ENCODE measurements at regions of chr4 and their contacts with region 1.

Region 1: GRCh38 chr4:173370477-173371291 is at the start of gene SAP30:
- DNase-seq: peak; percentile 99
- H3K4me3 ChIP-seq: peak within 1 kb of the TSS; percentile 87 to 99 (median 91)
- H3K27ac ChIP-seq: peak within 1 kb of the TSS; percentile 93
- H3K4me1 ChIP-seq: peaks cover 24% of the 10 kb centered on the region
- H3K27me3 ChIP-seq: no peaks in the 10 kb centered on the region
- CTCF ChIP-seq: no peak
- POLR2A ChIP-seq: peak; percentile 95
- total RNA-seq, gene SAP30: 23.8 and 27.1 TPM in 2 replicates

Region 2: GRCh38 chr4:173386751-173387150 is 16.1 kb after region 1 on chr4:
- CTCF ChIA-PET with region 1: no interaction called
- POLR2A ChIA-PET with region 1: no interaction called
- dilution Hi-C with region 1: no loop called
- intact Hi-C with region 1: no loop called
- DNase-seq: no peak
- H3K4me3 ChIP-seq: no peak overlapping the region
- H3K27ac ChIP-seq: no peak overlapping the region
- H3K4me1 ChIP-seq: no peaks in the 10 kb centered on the region
- H3K27me3 ChIP-seq: no peaks in the 10 kb centered on the region
- CTCF ChIP-seq: no peak
- POLR2A ChIP-seq: no peak

Region 3: DNA sequence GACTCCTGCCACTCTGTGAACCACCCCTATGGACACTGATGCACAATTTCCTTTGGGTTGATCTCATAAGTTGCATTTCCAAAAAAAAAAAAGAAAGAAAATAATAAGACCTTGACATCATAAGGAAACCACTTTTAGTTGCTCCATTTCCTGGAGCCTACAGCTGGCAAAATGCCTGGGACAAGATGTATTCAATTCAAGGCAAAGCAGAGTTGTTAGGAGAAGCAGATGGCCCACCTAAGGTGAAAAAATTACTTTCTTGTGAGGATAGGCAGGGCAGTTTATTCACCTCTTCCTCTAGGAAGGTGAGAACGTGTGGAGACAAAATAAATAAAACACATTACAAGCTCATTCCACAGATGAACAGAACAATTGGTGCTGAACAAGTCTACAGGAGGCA is 42.4 kb after region 1 on chr4:
- CTCF ChIA-PET with region 1: interaction called, 6 read pairs
- POLR2A ChIA-PET with region 1: interaction called, 7 read pairs
- dilution Hi-C with region 1: no loop called
- intact Hi-C with region 1: loop called (anchors 1 kb)
- DNase-seq: peak; percentile 68
- H3K4me3 ChIP-seq: no peak overlapping the region
- H3K27ac ChIP-seq: no peak overlapping the region
- H3K4me1 ChIP-seq: peaks cover 24% of the 10 kb centered on the region
- H3K27me3 ChIP-seq: no peaks in the 10 kb centered on the region
- CTCF ChIP-seq: no peak
- POLR2A ChIP-seq: no peak

Region 4: GRCh38 chr4:173466101-173466500 is 95.4 kb after region 1 on chr4:
- CTCF ChIA-PET with region 1: no interaction called
- POLR2A ChIA-PET with region 1: no interaction called
- dilution Hi-C with region 1: no loop called
- intact Hi-C with region 1: no loop called
- DNase-seq: no peak
- H3K4me3 ChIP-seq: no peak overlapping the region
- H3K27ac ChIP-seq: no peak overlapping the region
- H3K4me1 ChIP-seq: no peaks in the 10 kb centered on the region
- H3K27me3 ChIP-seq: no peaks in the 10 kb centered on the region
- CTCF ChIP-seq: no peak
- POLR2A ChIP-seq: no peak

Region 5: GRCh38 chr4:173494013-173494970 is 123.6 kb after region 1 on chr4:
- CTCF ChIA-PET with region 1: interaction called, 4 read pairs
- POLR2A ChIA-PET with region 1: interaction called, 5 read pairs
- dilution Hi-C with region 1: no loop called
- intact Hi-C with region 1: loop called (anchors 1 kb)
- DNase-seq: peak; percentile 53
- H3K4me3 ChIP-seq: peak overlapping the region; percentile 18 to 51 (median 24)
- H3K27ac ChIP-seq: no peak overlapping the region
- H3K4me1 ChIP-seq: peaks cover 14% of the 10 kb centered on the region
- H3K27me3 ChIP-seq: peaks cover 22 to 30% of the 10 kb centered on the region in 2 experiments
- CTCF ChIP-seq: peak; percentile 58 to 77
- POLR2A ChIP-seq: no peak

Region 6: DNA sequence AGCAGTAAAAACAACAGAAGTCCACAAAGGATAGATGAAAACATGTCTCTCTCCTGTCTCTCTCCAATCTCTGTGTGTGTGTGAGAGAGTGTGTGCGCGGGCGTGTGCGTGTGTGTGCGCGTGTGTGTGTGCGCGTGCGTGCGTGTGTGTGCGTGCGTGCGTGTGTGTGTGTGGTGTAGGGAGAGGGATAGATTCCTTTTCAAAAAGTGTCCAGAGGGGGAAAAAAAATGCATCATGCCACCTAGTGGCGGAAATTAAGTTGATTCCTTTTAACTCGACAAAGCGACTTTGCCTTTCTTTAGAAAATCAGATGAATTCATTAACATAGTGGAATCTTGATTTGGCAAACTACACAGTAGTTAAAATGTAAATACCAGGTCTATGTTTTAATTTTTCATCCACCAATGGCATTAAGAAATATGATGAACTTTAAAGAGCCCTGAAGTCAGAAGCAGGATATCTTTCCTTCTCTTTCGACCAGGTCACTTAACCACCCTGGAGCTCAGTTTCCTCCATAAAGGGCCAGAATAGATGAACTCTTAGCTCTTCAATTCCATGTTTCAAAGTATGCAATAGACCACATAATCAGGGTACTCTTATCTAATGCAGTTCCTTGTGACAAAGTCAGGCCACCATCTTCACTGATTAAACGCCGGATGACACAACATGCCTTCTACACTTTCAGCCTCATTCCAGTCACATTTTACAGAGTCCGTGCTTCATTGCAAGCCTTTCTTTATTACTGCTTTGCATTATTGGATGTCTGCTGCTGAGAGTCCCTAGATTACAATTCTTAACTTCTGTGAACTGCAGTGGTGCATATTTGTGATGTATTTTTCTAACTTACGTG is 750.0 kb after region 1 on chr4:
- CTCF ChIA-PET with region 1: no interaction called
- POLR2A ChIA-PET with region 1: interaction called, 10 read pairs
- dilution Hi-C with region 1: no loop called
- intact Hi-C with region 1: no loop called
- DNase-seq: peak; percentile 65
- H3K4me3 ChIP-seq: peak overlapping the region in 1 of 3 experiments; percentile 39
- H3K27ac ChIP-seq: no peak overlapping the region
- H3K4me1 ChIP-seq: no peaks in the 10 kb centered on the region
- H3K27me3 ChIP-seq: peaks cover 7 to 26% of the 10 kb centered on the region in 2 experiments
- CTCF ChIP-seq: peak; percentile 45 to 50
- POLR2A ChIP-seq: no peak

Region 7: GRCh38 chr4:175035905-175036304 is 1665.2 kb after region 1 on chr4:
- CTCF ChIA-PET with region 1: no interaction called
- POLR2A ChIA-PET with region 1: no interaction called
- dilution Hi-C with region 1: no loop called
- intact Hi-C with region 1: no loop called
- DNase-seq: no peak
- H3K4me3 ChIP-seq: no peak overlapping the region
- H3K27ac ChIP-seq: no peak overlapping the region
- H3K4me1 ChIP-seq: no peaks in the 10 kb centered on the region
- H3K27me3 ChIP-seq: no peaks in the 10 kb centered on the region
- CTCF ChIP-seq: no peak
- POLR2A ChIP-seq: no peak